WTC11 (cell line): ENCODE measurements at regions of chr6 and their contacts with region 1.

Region 1: GRCh38 chr6:42984001-42984923 is at the start of gene PPP2R5D:
- DNase-seq: peak; percentile 98
- ATAC-seq: peak; percentile 97
- H3K4me3 Mint-ChIP-seq: peak within 1 kb of the TSS; percentile 79
- H3K27ac Mint-ChIP-seq: peak within 1 kb of the TSS; percentile 80
- H3K4me1 Mint-ChIP-seq: peaks cover 27% of the 10 kb centered on the region
- H3K27me3 Mint-ChIP-seq: no peaks in the 10 kb centered on the region
- CTCF ChIP-seq: no peak
- total RNA-seq, gene PPP2R5D: 47.5 to 52.7 TPM (median 49.0 TPM) in 3 replicates

Region 2: DNA sequence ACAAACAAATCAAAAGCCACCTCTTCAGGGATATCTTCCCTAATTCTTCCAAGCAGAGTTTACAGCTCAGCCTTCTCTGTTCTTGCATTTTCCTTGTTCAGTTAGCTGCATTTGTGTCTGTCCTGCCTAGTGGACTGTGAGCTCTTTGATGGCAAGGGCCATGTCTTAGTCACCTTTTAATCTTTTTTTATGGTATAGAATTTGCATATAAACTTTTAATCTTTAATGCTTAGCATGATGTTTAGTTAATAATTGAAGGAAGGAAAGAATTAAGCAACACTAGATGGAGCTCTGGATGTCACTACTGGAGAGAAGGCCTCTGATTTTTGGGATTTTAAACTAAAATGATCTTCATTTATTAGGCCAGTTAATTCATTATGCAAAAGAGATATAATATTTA is 12.3 kb after region 1 on chr6:
- CTCF ChIA-PET with region 1: interaction called, 11 read pairs
- POLR2A ChIA-PET with region 1: interaction called, 5 read pairs
- DNase-seq: no peak
- ATAC-seq: no peak
- H3K4me3 Mint-ChIP-seq: no peak overlapping the region
- H3K27ac Mint-ChIP-seq: no peak overlapping the region
- H3K4me1 Mint-ChIP-seq: no peaks in the 10 kb centered on the region
- H3K27me3 Mint-ChIP-seq: no peaks in the 10 kb centered on the region
- CTCF ChIP-seq: no peak

Region 3: GRCh38 chr6:43174263-43175112 is 190.2 kb after region 1 on chr6:
- CTCF ChIA-PET with region 1: no interaction called
- POLR2A ChIA-PET with region 1: interaction called, 10 read pairs
- DNase-seq: peak; percentile 97
- ATAC-seq: peak; percentile 70
- H3K4me3 Mint-ChIP-seq: peak overlapping the region; percentile 94
- H3K27ac Mint-ChIP-seq: peak overlapping the region; percentile 86
- H3K4me1 Mint-ChIP-seq: peaks cover 31% of the 10 kb centered on the region
- H3K27me3 Mint-ChIP-seq: peaks cover 10% of the 10 kb centered on the region
- CTCF ChIP-seq: no peak